ENCODE measurements at regions of chr7 and their contacts with region 1.

Region 1: DNA sequence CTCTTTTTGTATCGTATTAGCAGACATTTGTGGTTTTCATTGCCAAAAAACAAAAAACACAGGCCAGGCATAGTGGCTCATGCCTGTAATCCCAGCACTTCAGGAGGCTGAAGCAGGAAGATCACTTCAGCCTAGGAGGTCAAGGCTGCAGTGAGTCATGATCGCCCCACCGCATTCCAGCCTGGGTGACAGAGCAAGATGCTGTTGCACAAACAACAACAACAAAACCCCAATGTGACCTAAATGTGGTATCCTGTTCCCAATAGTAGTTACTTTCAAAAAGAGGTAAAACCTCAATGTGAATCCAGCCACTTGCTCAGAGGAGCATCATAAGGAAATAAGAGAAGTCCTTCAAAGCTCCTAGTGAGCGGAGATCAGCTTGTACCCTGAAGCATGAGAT is 45.8 kb upstream of the SKAP2 start:
- DNase-seq: peak in 4 of 35 experiments; percentile 0 to 5 (median 1)
- ATAC-seq: peak in 1 of 4 experiments; percentile 52
- H3K4me3 ChIP-seq: no peak overlapping the region
- H3K4me3 Mint-ChIP-seq: no peak overlapping the region
- H3K27ac ChIP-seq: no peak overlapping the region
- H3K27ac Mint-ChIP-seq: no peak overlapping the region
- H3K4me1 ChIP-seq: no peaks in the 10 kb centered on the region
- H3K4me1 Mint-ChIP-seq: peaks cover 0 to 2% (median 0%) of the 10 kb centered on the region in 3 donors
- H3K27me3 ChIP-seq: no peaks in the 10 kb centered on the region
- H3K27me3 Mint-ChIP-seq: peaks cover 0 to 3% of the 10 kb centered on the region in 2 donors

Region 2: GRCh38 chr7:25877802-25878789 is 1032.1 kb before region 1 on chr7:
- CTCF ChIA-PET with region 1: no interaction called
- POLR2A ChIA-PET with region 1: interaction called in 1 of 2 experiments, 11 read pairs
- DNase-seq: no peak
- ATAC-seq: no peak
- H3K4me3 ChIP-seq: no peak overlapping the region
- H3K4me3 Mint-ChIP-seq: no peak overlapping the region
- H3K27ac ChIP-seq: no peak overlapping the region
- H3K27ac Mint-ChIP-seq: no peak overlapping the region
- H3K4me1 ChIP-seq: no peaks in the 10 kb centered on the region
- H3K4me1 Mint-ChIP-seq: no peaks in the 10 kb centered on the region
- H3K27me3 ChIP-seq: peaks cover 8 to 17% of the 10 kb centered on the region in 2 experiments
- H3K27me3 Mint-ChIP-seq: peaks cover 39 to 41% of the 10 kb centered on the region in 2 donors

Region 3: GRCh38 chr7:26705567-26705966 is 204.7 kb before region 1 on chr7:
- CTCF ChIA-PET with region 1: interaction called in 1 of 2 experiments, 18 read pairs
- POLR2A ChIA-PET with region 1: no interaction called
- DNase-seq: no peak
- ATAC-seq: no peak
- H3K4me3 ChIP-seq: no peak overlapping the region
- H3K4me3 Mint-ChIP-seq: no peak overlapping the region
- H3K27ac ChIP-seq: no peak overlapping the region
- H3K27ac Mint-ChIP-seq: no peak overlapping the region
- H3K4me1 ChIP-seq: no peaks in the 10 kb centered on the region
- H3K4me1 Mint-ChIP-seq: no peaks in the 10 kb centered on the region
- H3K27me3 ChIP-seq: no peaks in the 10 kb centered on the region
- H3K27me3 Mint-ChIP-seq: peaks cover 0 to 10% of the 10 kb centered on the region in 2 donors